PC-9 (cell line): ENCODE measurements at regions of chr5 and their contacts with region 1.

Region 1: GRCh38 chr5:172714491-172715421 is 56.2 kb downstream of the DUSP1 start:
- DNase-seq: peak; percentile 74 to 80
- H3K4me3 ChIP-seq: no peak overlapping the region
- H3K27ac ChIP-seq: 0 out of 2 replicates have a peak overlapping the region, but pooled peaks have one; percentile 18
- H3K4me1 ChIP-seq: peaks cover 14% of the 10 kb centered on the region
- H3K27me3 ChIP-seq: no peaks in the 10 kb centered on the region
- CTCF ChIP-seq: peak; percentile 88

Region 2: GRCh38 chr5:172764849-172765765 is 50.4 kb after region 1 on chr5:
- CTCF ChIA-PET with region 1: interaction called, 3 read pairs
- POLR2A ChIA-PET with region 1: interaction called, 3 read pairs
- intact Hi-C with region 1: loop called (anchors 1 kb)
- DNase-seq: peak; percentile 97 to 99
- H3K4me3 ChIP-seq: peak overlapping the region; percentile 52; the same call in 1 of the 2 replicates
- H3K27ac ChIP-seq: peak overlapping the region; percentile 59
- H3K4me1 ChIP-seq: peaks cover 31% of the 10 kb centered on the region
- H3K27me3 ChIP-seq: no peaks in the 10 kb centered on the region
- CTCF ChIP-seq: no peak

Region 3: DNA sequence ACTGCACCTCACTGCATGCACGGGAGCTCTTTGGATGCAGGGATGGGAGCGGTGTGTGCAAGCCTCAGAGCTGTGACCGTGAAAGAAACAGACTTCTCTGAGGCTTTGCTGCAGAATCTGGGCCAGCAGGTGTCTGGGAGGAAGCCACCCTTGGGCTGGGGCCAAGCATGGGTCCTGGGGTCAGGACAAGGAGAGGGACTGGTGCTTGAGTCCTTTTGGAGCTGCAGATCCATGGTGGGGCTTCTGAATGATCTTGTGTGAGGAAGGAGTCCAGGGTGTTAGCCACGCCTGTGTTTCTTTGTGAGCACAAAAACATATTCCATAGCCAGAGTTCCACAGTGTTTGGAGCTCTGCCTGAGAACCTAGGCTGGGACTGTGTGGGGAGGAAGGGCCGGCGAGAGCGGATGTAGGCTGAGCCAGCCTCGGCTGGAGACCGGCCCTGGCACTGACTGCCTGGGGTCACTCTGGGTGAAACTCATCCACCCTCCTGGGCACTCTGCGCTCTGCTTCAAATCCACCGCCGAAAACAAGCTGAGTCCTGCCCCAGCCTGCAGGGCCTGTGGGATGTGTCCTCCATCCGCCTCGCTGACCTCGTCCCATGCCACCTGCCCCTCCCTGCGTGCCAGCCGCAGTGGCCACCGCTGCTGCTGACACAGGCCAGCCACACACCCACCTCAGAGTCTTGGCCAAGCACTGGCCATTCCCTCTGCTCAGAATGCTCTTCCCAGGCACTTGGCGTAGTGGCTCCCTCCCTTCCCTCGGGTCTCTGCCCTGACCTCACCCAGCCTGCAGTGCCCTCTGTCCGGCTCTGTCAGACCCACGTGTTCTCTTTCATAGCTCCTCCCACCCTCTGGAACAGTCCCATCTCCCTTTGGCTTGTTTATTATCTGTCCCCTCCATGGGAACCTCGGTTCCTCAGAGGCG is 146.0 kb after region 1 on chr5:
- CTCF ChIA-PET with region 1: interaction called, 4 read pairs
- POLR2A ChIA-PET with region 1: no interaction called
- intact Hi-C with region 1: loop called (anchors 2 kb)
- DNase-seq: peak; percentile 64 to 90
- H3K4me3 ChIP-seq: no peak overlapping the region
- H3K27ac ChIP-seq: peak overlapping the region; percentile 99
- H3K4me1 ChIP-seq: peaks cover 65% of the 10 kb centered on the region
- H3K27me3 ChIP-seq: no peaks in the 10 kb centered on the region
- CTCF ChIP-seq: no peak

Region 4: GRCh38 chr5:172932313-172933017 is 217.7 kb after region 1 on chr5:
- CTCF ChIA-PET with region 1: interaction called, 19 read pairs
- POLR2A ChIA-PET with region 1: no interaction called
- intact Hi-C with region 1: loop called (anchors 1 kb)
- DNase-seq: peak in 1 of 2 experiments; percentile 70
- H3K4me3 ChIP-seq: no peak overlapping the region
- H3K27ac ChIP-seq: no peak overlapping the region
- H3K4me1 ChIP-seq: peaks cover 22% of the 10 kb centered on the region
- H3K27me3 ChIP-seq: no peaks in the 10 kb centered on the region
- CTCF ChIP-seq: peak; percentile 85

Region 5: DNA sequence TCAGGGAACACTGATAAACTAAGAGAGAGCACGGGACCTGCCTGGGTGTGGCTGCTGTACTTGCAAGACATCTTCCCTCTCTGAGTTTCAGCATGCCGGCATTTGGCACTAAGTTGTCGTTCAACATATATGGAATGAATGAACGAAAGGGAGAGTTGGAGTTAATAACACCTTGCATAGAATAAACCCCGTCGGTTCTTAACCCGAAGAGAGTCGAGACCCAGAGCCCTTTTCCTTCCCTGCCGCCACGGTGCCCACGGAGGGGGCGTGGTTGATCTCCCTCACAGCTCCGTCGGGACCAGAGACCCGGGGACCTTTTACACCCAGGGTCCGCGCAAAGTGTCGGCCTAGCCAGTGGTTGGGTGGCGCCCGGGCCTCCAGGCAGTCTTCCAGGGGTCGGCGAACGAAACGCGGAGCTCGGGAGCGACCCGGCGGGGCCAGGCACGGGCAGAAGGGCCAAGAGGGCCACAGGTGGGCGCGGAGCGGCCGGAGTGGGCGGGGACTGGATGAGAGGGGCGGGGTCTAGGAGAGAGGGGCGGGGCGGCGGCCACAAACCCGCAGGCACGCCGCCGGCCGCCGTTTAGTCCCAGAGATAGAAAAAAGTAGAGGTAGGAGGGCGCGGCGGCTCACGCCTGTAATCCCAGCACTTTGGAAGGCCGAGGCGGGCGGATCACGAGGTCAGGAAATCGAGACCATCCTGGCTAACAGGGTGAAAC is 243.7 kb after region 1 on chr5:
- CTCF ChIA-PET with region 1: no interaction called
- POLR2A ChIA-PET with region 1: interaction called, 7 read pairs
- intact Hi-C with region 1: loop called (anchors 1 kb)
- DNase-seq: peak; percentile 55 to 74
- H3K4me3 ChIP-seq: peak overlapping the region; percentile 99
- H3K27ac ChIP-seq: peak overlapping the region; percentile 72
- H3K4me1 ChIP-seq: peaks cover 14% of the 10 kb centered on the region
- H3K27me3 ChIP-seq: no peaks in the 10 kb centered on the region
- CTCF ChIP-seq: no peak